ENCODE measurements at regions of chr21 and their contacts with region 1.

Region 1: GRCh38 chr21:44892536-44893277 is 19.2 kb upstream of the PTTG1IP start:
- DNase-seq: peak; percentile 56 to 86 (median 82)
- ATAC-seq: peak; percentile 90
- H3K4me3 ChIP-seq: no peak overlapping the region
- H3K4me3 Mint-ChIP-seq: no peak overlapping the region
- H3K27ac ChIP-seq: peak overlapping the region in 1 of 2 experiments; percentile 34
- H3K27ac Mint-ChIP-seq: peak overlapping the region; percentile 79
- H3K4me1 ChIP-seq: peaks cover 13% of the 10 kb centered on the region
- H3K4me1 Mint-ChIP-seq: peaks cover 15% of the 10 kb centered on the region
- H3K27me3 ChIP-seq: no peaks in the 10 kb centered on the region
- H3K27me3 Mint-ChIP-seq: no peaks in the 10 kb centered on the region
- CTCF ChIP-seq: peak; percentile 96

Region 2: DNA sequence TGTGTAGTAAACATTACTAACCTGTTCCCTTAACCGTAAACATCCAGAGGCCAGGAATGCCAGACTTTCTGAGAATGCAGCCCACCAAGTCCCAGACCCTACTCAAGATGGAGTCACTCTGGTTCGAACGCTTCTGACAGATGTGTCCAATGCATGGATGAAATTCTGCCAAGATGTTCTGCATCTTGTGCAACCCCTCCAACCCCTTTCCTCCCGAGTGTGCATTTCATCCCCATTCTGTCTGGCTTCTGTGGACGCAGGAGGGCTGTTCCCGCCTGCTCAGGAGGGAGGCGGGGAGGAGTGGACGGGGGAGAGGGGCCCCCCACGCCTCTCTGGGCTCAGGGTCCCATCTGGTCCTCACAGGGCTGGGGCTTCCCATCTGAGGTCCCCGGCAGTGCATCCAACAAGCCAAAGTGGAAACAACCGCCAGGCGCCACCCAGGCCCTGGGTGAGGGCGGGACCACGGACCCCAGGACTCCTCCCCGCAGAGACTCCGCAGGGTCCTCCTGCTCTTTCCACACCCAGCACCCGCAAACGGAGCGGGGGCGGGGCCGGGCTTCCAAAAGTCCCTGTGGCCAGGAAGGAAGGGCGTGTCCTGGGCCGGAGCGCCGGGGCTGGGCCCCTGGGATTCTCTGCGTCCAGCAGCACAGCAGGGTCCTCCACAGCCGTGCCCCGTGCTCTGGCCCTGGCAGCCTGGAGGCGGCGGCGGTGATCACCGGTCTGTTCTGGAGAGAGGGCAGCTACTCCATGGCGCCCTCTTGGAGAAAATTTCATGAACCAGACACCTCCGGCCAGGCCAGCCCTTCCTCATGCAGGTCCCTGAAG is 47.1 kb before region 1 on chr21:
- CTCF ChIA-PET with region 1: no interaction called
- POLR2A ChIA-PET with region 1: interaction called, 3 read pairs
- intact Hi-C with region 1: loop called in 1 of 2 experiments (anchors 1 kb)
- DNase-seq: peak in 8 of 9 experiments; percentile 24 to 70 (median 47)
- ATAC-seq: peak; percentile 67
- H3K4me3 ChIP-seq: peak overlapping the region; percentile 37
- H3K4me3 Mint-ChIP-seq: peak overlapping the region; percentile 70
- H3K27ac ChIP-seq: no peak overlapping the region
- H3K27ac Mint-ChIP-seq: no peak overlapping the region
- H3K4me1 ChIP-seq: peaks cover 18% of the 10 kb centered on the region
- H3K4me1 Mint-ChIP-seq: peaks cover 13% of the 10 kb centered on the region
- H3K27me3 ChIP-seq: peaks cover 0 to 3% of the 10 kb centered on the region in 2 experiments
- H3K27me3 Mint-ChIP-seq: peaks cover 2% of the 10 kb centered on the region
- CTCF ChIP-seq: no peak

Region 3: GRCh38 chr21:44880762-44881585 is 11.7 kb before region 1 on chr21:
- CTCF ChIA-PET with region 1: interaction called, 25 read pairs
- POLR2A ChIA-PET with region 1: interaction called, 3 read pairs
- intact Hi-C with region 1: no loop called
- DNase-seq: peak in 2 of 9 experiments; percentile 38 to 61
- ATAC-seq: peak; percentile 59
- H3K4me3 ChIP-seq: no peak overlapping the region
- H3K4me3 Mint-ChIP-seq: peak overlapping the region; percentile 13
- H3K27ac ChIP-seq: no peak overlapping the region
- H3K27ac Mint-ChIP-seq: peak overlapping the region; percentile 84
- H3K4me1 ChIP-seq: peaks cover 24% of the 10 kb centered on the region
- H3K4me1 Mint-ChIP-seq: peaks cover 25% of the 10 kb centered on the region
- H3K27me3 ChIP-seq: no peaks in the 10 kb centered on the region
- H3K27me3 Mint-ChIP-seq: no peaks in the 10 kb centered on the region
- CTCF ChIP-seq: no peak

Region 4: GRCh38 chr21:44911389-44912157 is 18.9 kb after region 1 on chr21:
- CTCF ChIA-PET with region 1: interaction called, 65 read pairs
- POLR2A ChIA-PET with region 1: interaction called, 14 read pairs
- intact Hi-C with region 1: loop called (anchors 1 to 2 kb)
- DNase-seq: peak; percentile 26 to 86 (median 71)
- ATAC-seq: peak; percentile 74
- H3K4me3 ChIP-seq: peak overlapping the region; percentile 41 to 42
- H3K4me3 Mint-ChIP-seq: peak overlapping the region; percentile 70
- H3K27ac ChIP-seq: peak overlapping the region; percentile 73 to 79
- H3K27ac Mint-ChIP-seq: peak overlapping the region; percentile 92
- H3K4me1 ChIP-seq: peaks cover 96% of the 10 kb centered on the region
- H3K4me1 Mint-ChIP-seq: peaks cover 79% of the 10 kb centered on the region
- H3K27me3 ChIP-seq: no peaks in the 10 kb centered on the region
- H3K27me3 Mint-ChIP-seq: no peaks in the 10 kb centered on the region
- CTCF ChIP-seq: peak; percentile 66

Region 5: DNA sequence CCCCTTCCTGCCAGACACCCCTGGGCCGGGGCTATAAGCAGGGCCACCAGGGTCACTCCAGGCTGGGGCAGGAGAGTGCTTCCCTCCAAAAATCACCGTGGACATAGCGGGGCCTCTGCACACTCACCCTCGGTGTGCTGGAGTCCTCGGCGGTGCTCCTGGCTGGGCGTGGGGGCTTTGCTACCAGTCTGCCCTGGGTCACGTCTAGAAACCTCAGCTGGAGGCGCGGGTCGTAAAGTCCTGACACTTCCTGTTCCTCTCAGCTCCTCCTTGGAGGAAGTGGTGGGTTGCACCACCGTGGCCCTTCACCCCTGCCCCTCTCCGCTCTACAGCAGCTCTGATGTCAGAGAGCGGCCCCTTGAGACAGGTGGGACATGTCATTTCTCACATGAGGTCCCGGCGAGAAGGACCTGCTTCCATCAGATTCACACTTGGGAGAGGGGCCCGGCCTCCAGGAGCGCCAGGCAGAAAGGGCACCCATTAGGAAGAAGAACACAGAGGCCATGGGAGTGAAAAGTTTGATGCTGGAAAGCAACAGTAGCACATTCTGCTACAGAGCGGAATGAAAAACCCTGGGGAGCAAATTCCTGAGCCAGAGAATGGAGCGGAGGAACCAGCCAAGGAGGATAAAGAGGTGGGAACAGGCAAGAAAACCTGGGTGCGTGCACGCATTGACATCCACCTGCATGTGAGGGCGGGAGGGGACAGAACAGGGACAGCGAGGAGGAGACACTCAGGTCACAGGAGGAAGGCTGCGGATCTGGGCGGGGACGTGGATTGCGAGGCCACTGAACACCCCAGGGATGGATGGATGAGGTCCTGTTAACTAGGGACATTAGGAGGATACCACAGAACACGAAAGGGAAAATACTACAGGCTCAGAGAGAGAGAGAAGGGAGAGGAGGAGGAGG is 28.2 kb after region 1 on chr21 and contains the start of gene ITGB2:
- CTCF ChIA-PET with region 1: interaction called, 45 read pairs
- POLR2A ChIA-PET with region 1: interaction called, 5 read pairs
- intact Hi-C with region 1: no loop called
- DNase-seq: peak in 8 of 9 experiments; percentile 28 to 84 (median 68)
- ATAC-seq: peak; percentile 65
- H3K4me3 ChIP-seq: peak within 1 kb of the TSS; percentile 99
- H3K4me3 Mint-ChIP-seq: peak within 1 kb of the TSS; percentile 96
- H3K27ac ChIP-seq: peak within 1 kb of the TSS; percentile 72 to 77
- H3K27ac Mint-ChIP-seq: peak within 1 kb of the TSS; percentile 92
- H3K4me1 ChIP-seq: peaks cover 73% of the 10 kb centered on the region
- H3K4me1 Mint-ChIP-seq: peaks cover 76% of the 10 kb centered on the region
- H3K27me3 ChIP-seq: no peaks in the 10 kb centered on the region
- H3K27me3 Mint-ChIP-seq: no peaks in the 10 kb centered on the region
- CTCF ChIP-seq: no peak
- total RNA-seq, gene ITGB2: 234 to 245 TPM

Measured in CD8-positive, alpha-beta T cell (primary cell).